Natural killer cell (primary cell): ENCODE measurements at regions of chr17 and their contacts with region 1.

Region 1: GRCh38 chr17:59892924-59893676 is at the starts of genes RPS6KB1 and TUBD1:
- DNase-seq: peak; percentile 94 to 100
- ATAC-seq: peak; percentile 89 to 97 (median 93)
- H3K4me3 ChIP-seq: peak within 1 kb of the TSS; percentile 90
- H3K4me3 Mint-ChIP-seq: peak within 1 kb of the TSS; percentile 100
- H3K27ac ChIP-seq: peak within 1 kb of the TSS; percentile 94
- H3K27ac Mint-ChIP-seq: peak within 1 kb of the TSS; percentile 96 to 99
- H3K4me1 ChIP-seq: peaks cover 24% of the 10 kb centered on the region
- H3K4me1 Mint-ChIP-seq: peaks cover 40 to 52% of the 10 kb centered on the region in 2 donors
- H3K27me3 ChIP-seq: no peaks in the 10 kb centered on the region
- H3K27me3 Mint-ChIP-seq: no peaks in the 10 kb centered on the region
- CTCF ChIP-seq: no peak
- total RNA-seq, gene RPS6KB1: 70.6 to 85.0 (median 78.2) TPM
- total RNA-seq, gene TUBD1: 8.4 to 9.0 (median 8.4) TPM

Region 2: DNA sequence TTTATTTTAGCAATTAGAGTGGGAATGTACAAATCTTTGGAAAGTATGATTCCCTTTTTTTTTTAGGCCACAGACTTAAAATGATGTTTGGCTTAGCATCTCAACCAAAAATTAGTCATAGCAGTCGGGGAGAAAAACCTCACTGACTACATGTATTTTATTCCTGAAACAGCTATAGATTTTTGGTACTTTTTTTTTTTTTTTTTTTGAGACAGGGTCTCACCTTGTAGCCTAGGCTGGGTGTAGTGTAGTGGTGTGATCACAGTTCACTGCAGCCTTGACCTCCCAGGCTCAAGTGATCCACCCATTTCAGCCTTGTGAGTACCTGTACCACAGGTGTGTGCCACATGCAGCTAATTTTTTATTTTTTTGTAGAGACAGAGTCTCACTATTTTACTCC is 48.0 kb after region 1 on chr17:
- intact Hi-C with region 1: no loop called
- DNase-seq: no peak
- ATAC-seq: no peak
- H3K4me3 ChIP-seq: no peak overlapping the region
- H3K4me3 Mint-ChIP-seq: no peak overlapping the region
- H3K27ac ChIP-seq: no peak overlapping the region
- H3K27ac Mint-ChIP-seq: no peak overlapping the region
- H3K4me1 ChIP-seq: no peaks in the 10 kb centered on the region
- H3K4me1 Mint-ChIP-seq: peaks cover 0 to 5% of the 10 kb centered on the region in 2 donors
- H3K27me3 ChIP-seq: no peaks in the 10 kb centered on the region
- H3K27me3 Mint-ChIP-seq: no peaks in the 10 kb centered on the region
- CTCF ChIP-seq: no peak

Region 3: GRCh38 chr17:59964482-59965328 is 71.6 kb after region 1 on chr17 and contains the start of gene RNFT1:
- intact Hi-C with region 1: loop called (anchors 1 kb)
- DNase-seq: peak; percentile 91 to 94
- ATAC-seq: peak; percentile 83 to 97 (median 86)
- H3K4me3 ChIP-seq: peak within 1 kb of the TSS; percentile 84
- H3K4me3 Mint-ChIP-seq: peak within 1 kb of the TSS; percentile 96
- H3K27ac ChIP-seq: peak within 1 kb of the TSS; percentile 91
- H3K27ac Mint-ChIP-seq: peak within 1 kb of the TSS; percentile 94 to 98
- H3K4me1 ChIP-seq: peaks cover 18% of the 10 kb centered on the region
- H3K4me1 Mint-ChIP-seq: peaks cover 20 to 22% of the 10 kb centered on the region in 2 donors
- H3K27me3 ChIP-seq: no peaks in the 10 kb centered on the region
- H3K27me3 Mint-ChIP-seq: no peaks in the 10 kb centered on the region
- CTCF ChIP-seq: no peak
- total RNA-seq, gene RNFT1: 37.5 to 54.5 (median 39.3) TPM